Psoas muscle (tissue), 8 donors: ENCODE measurements at regions of chr17 and their contacts with region 1.

Region 1: GRCh38 chr17:60641810-60642220 is 35.8 kb upstream of the BCAS3 start:
- DNase-seq: no peak
- ATAC-seq: peak in 3 of 4 donors; percentile 46 to 56 (median 51)
- H3K4me3 ChIP-seq: no peak overlapping the region
- H3K27ac ChIP-seq: no peak overlapping the region
- H3K4me1 ChIP-seq: peaks cover 7% of the 10 kb centered on the region
- H3K27me3 ChIP-seq: no peaks in the 10 kb centered on the region
- CTCF ChIP-seq: peak; percentile 35

Region 2: DNA sequence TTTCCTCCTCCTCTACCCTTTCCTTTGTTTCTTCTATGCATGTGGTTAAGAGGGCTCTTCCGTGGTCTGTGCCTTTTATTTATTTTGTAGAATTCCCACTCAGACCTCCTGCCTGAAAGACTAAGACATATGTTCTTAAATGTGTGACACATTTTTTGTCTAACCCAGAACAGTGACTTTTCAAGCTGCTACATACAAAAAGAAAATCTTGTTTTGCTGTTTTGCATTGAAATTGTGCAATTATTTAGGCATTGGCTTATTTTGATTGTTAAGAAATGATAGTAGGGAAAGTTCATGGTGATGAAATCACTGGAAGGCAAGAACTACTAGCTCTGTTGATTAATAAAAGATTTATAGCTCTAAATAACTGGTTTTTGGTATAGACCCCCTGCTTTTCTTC is 825.9 kb before region 1 on chr17:
- intact Hi-C with region 1: no loop called
- DNase-seq: no peak
- ATAC-seq: no peak
- H3K4me3 ChIP-seq: no peak overlapping the region
- H3K27ac ChIP-seq: no peak overlapping the region
- H3K4me1 ChIP-seq: peaks cover 5% of the 10 kb centered on the region
- H3K27me3 ChIP-seq: no peaks in the 10 kb centered on the region
- CTCF ChIP-seq: no peak

Region 3: DNA sequence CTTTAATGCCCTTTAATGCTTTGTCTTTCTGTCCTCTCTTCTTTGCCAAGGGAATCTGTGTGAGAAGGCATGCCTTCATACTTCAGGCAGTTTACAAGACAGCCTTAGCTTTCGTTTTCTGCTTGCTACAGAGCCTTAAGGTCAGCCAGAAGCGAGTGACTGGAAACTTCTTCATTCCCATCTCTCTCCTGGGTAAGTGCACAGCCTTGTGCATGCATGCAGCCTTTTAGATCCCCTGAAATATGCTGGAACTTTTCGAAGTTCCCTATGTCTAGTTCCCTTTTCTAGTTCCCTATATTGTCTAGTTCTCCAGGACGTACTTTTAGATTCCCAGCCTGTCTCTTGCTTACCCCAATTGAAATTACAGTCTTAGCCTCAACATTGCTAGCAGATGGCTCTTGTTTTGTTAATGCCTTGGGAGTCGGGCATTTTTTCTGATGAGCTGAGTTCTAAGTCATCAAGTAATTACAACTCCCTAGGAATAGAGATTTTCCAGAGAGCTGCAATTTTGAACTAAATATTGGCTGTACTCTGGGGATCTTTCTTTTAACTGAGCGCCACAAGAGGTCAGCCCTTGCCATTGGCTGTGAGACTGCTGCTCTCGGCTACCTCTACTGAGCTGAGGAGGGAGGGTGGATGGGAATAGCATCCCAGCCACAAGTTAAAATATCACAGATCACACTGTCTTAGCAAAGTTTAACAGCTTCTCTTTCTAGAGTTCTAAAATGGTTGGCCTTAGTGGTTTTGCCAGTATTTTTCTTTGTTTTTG is 64.5 kb before region 1 on chr17:
- intact Hi-C with region 1: loop called (anchors 2 to 5 kb)
- DNase-seq: no peak
- ATAC-seq: peak; percentile 69 to 94 (median 82)
- H3K4me3 ChIP-seq: peak overlapping the region; percentile 52
- H3K27ac ChIP-seq: peak overlapping the region; percentile 55
- H3K4me1 ChIP-seq: no peaks in the 10 kb centered on the region
- H3K27me3 ChIP-seq: no peaks in the 10 kb centered on the region
- CTCF ChIP-seq: peak; percentile 36

Region 4: GRCh38 chr17:60599620-60600489 is 42.0 kb before region 1 on chr17 and contains the start of gene PPM1D:
- intact Hi-C with region 1: loop called (anchors 2 to 5 kb)
- DNase-seq: peak; percentile 99 to 100
- ATAC-seq: peak; percentile 96 to 98 (median 97)
- H3K4me3 ChIP-seq: peak within 1 kb of the TSS; percentile 97
- H3K27ac ChIP-seq: peak within 1 kb of the TSS; percentile 95
- H3K4me1 ChIP-seq: peaks cover 21% of the 10 kb centered on the region
- H3K27me3 ChIP-seq: no peaks in the 10 kb centered on the region
- CTCF ChIP-seq: no peak
- total RNA-seq, gene PPM1D: 7.0 to 10.5 (median 8.4) TPM

Region 5: DNA sequence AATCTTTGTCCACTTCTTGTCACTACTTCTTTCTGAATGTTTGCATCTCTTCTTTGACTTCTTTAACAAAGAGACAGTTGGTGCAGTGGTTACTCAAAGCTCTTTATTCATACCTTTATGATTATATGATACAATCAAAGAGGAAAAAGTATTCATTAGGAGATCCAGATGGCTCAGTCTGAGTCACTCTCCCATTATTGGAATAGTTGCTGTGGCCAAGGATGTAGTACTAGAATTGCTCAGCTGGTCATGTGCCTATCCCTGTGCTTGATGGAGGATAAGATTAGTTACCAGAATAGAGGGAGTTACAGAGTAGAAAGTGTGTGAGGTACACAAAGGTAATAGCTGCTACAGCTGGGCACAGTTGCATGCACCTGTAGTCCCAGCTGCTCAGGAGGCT is 54.1 kb after region 1 on chr17:
- intact Hi-C with region 1: no loop called
- DNase-seq: no peak
- ATAC-seq: no peak
- H3K4me3 ChIP-seq: no peak overlapping the region
- H3K27ac ChIP-seq: no peak overlapping the region
- H3K4me1 ChIP-seq: no peaks in the 10 kb centered on the region
- H3K27me3 ChIP-seq: no peaks in the 10 kb centered on the region
- CTCF ChIP-seq: no peak